Naive thymus-derived CD4-positive, alpha-beta T cell (primary cell): ENCODE measurements at regions of chr17 and their contacts with region 1.

Region 1: GRCh38 chr17:39621523-39622379 is 5.0 kb upstream of the PPP1R1B start:
- DNase-seq: peak; percentile 74 to 95 (median 86)
- ATAC-seq: peak; percentile 94
- H3K4me3 ChIP-seq: peak overlapping the region; percentile 41
- H3K4me3 Mint-ChIP-seq: peak overlapping the region in 8 of 10 donors; percentile 34 to 82 (median 58)
- H3K27ac ChIP-seq: no peak overlapping the region
- H3K27ac Mint-ChIP-seq: peak overlapping the region in 4 of 9 donors; percentile 10 to 74 (median 66)
- H3K4me1 ChIP-seq: peaks cover 12 to 26% of the 10 kb centered on the region in 2 donors
- H3K4me1 Mint-ChIP-seq: peaks cover 15 to 38% (median 24%) of the 10 kb centered on the region in 7 donors
- H3K27me3 ChIP-seq: peaks cover 3 to 7% of the 10 kb centered on the region in 2 donors
- H3K27me3 Mint-ChIP-seq: peaks cover 5 to 69% (median 18%) of the 10 kb centered on the region in 5 donors

Region 2: GRCh38 chr17:39547713-39548478 is 73.9 kb before region 1 on chr17:
- CTCF ChIA-PET with region 1: interaction called, 53 read pairs
- POLR2A ChIA-PET with region 1: no interaction called
- intact Hi-C with region 1: loop called (anchors 1 kb)
- DNase-seq: peak; percentile 43 to 81 (median 68)
- ATAC-seq: peak; percentile 87
- H3K4me3 ChIP-seq: no peak overlapping the region
- H3K4me3 Mint-ChIP-seq: no peak overlapping the region
- H3K27ac ChIP-seq: no peak overlapping the region
- H3K27ac Mint-ChIP-seq: no peak overlapping the region
- H3K4me1 ChIP-seq: no peaks in the 10 kb centered on the region
- H3K4me1 Mint-ChIP-seq: peaks cover 0 to 2% (median 0%) of the 10 kb centered on the region in 7 donors
- H3K27me3 ChIP-seq: no peaks in the 10 kb centered on the region
- H3K27me3 Mint-ChIP-seq: no peaks in the 10 kb centered on the region

Region 3: DNA sequence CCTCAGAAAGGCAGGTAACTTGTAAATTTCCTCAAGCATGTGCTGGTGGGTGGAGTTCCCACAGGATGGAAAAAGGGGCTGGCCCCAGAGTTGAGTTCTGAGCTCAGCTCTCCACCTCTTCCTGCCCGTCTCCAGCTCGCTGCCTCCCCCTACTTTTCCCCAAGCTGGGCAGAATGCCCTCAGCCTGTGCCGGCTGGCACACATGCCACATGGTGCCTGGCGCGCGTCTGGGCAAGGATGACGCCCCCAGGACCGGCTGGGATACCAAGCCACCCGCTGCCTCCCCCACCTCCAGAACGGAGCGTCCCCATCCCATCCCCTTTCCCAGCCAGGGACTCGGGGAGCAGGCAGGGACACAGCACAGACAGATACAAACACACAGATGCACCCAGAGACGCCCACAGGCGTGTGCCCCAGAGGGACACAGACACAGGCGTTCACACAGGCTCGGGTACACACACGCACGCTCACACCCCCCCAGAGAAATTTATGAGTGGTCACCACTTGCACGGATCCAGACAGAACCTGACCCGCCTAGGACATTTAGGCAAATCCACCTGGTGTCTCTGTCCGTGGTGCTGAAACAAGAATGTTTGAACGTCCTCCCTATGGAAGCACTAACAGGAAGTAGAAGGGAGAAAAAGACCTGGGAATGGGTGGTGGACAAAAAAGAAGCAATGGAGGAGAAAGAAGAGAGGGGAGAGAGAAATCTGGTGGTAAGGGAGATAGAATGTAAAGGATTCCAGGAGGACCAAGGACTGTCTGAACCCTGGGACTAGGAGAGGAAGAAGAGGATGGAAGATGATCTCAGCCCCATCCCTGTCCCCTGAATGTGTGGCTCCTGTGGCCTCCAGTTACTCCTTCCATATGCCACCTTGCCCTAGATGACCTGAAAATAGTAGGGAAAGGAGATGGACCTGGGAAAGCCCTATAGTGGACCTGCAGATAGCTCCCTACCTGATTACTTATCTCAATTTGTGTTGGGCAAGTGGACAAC is 29.5 kb before region 1 on chr17:
- CTCF ChIA-PET with region 1: no interaction called
- POLR2A ChIA-PET with region 1: no interaction called
- intact Hi-C with region 1: no loop called
- DNase-seq: peak in 1 of 9 donors; percentile 34
- ATAC-seq: no peak
- H3K4me3 ChIP-seq: no peak overlapping the region
- H3K4me3 Mint-ChIP-seq: no peak overlapping the region
- H3K27ac ChIP-seq: no peak overlapping the region
- H3K27ac Mint-ChIP-seq: no peak overlapping the region
- H3K4me1 ChIP-seq: no peaks in the 10 kb centered on the region
- H3K4me1 Mint-ChIP-seq: peaks cover 0 to 12% (median 8%) of the 10 kb centered on the region in 7 donors
- H3K27me3 ChIP-seq: peaks cover 0 to 7% of the 10 kb centered on the region in 2 donors
- H3K27me3 Mint-ChIP-seq: peaks cover 49 to 80% (median 67%) of the 10 kb centered on the region in 5 donors

Region 4: DNA sequence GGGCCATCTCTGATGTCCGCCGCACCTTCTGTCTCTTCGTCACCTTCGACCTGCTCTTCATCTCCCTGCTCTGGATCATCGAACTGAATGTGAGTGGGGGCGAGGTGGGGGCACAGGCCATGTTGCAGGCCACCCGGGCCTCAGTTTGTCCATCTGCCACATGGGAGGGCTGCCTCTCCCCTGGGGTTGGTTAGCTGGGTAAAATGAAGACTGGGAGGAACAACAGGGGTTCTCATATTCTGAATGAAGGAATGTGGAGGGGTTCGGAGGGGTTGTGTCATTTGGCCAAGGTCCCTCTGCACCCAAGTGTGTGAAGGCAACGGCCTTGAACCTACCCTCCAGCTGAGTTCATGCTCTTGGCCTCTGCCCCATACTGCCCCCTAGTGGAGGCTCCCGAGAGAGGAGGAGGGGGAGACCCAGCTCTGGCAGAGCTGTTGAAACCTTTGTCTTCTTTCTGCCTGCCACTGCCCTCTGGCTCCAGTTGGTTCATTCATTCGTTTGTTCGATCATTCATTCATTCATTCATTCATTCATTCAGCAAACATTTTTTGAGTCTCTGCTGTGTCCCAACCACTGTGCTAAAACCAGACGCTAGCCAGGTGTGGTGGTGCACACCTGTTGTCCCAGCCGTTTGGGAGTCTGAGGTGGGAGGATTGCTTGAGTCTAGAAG is 32.0 kb after region 1 on chr17:
- CTCF ChIA-PET with region 1: interaction called, 25 read pairs
- POLR2A ChIA-PET with region 1: no interaction called
- intact Hi-C with region 1: loop called (anchors 1 to 2 kb)
- DNase-seq: peak; percentile 58 to 83 (median 71)
- ATAC-seq: peak; percentile 91
- H3K4me3 ChIP-seq: no peak overlapping the region
- H3K4me3 Mint-ChIP-seq: no peak overlapping the region
- H3K27ac ChIP-seq: peak overlapping the region; percentile 36
- H3K27ac Mint-ChIP-seq: peak overlapping the region in 5 of 9 donors; percentile 21 to 74 (median 51)
- H3K4me1 ChIP-seq: peaks cover 4 to 23% of the 10 kb centered on the region in 2 donors
- H3K4me1 Mint-ChIP-seq: peaks cover 24 to 74% (median 63%) of the 10 kb centered on the region in 7 donors
- H3K27me3 ChIP-seq: no peaks in the 10 kb centered on the region
- H3K27me3 Mint-ChIP-seq: no peaks in the 10 kb centered on the region

Region 5: DNA sequence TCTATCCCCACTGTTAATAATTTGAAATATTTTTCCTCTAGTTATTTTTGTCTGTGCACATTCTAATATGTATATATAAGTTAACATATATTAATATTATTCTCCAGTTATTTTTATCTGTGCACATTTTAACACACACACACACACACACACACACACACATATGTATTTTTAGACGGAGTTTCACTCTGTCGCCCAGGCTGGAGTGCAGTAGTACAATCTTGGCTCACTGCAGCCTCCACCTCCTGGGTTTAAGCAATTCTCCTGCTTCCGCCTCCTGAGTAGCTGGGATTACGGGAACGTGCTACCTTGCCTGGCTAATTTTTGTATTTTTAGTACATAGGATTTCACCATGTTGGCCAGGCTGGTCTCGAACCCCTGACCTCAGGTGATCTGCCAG is 95.9 kb after region 1 on chr17:
- CTCF ChIA-PET with region 1: interaction called, 3 read pairs
- POLR2A ChIA-PET with region 1: no interaction called
- intact Hi-C with region 1: loop called in 1 of 2 experiments (anchors 1 kb)
- DNase-seq: no peak
- ATAC-seq: no peak
- H3K4me3 ChIP-seq: no peak overlapping the region
- H3K4me3 Mint-ChIP-seq: no peak overlapping the region
- H3K27ac ChIP-seq: no peak overlapping the region
- H3K27ac Mint-ChIP-seq: no peak overlapping the region
- H3K4me1 ChIP-seq: no peaks in the 10 kb centered on the region
- H3K4me1 Mint-ChIP-seq: peaks cover 0 to 2% (median 0%) of the 10 kb centered on the region in 7 donors
- H3K27me3 ChIP-seq: no peaks in the 10 kb centered on the region
- H3K27me3 Mint-ChIP-seq: no peaks in the 10 kb centered on the region

Region 6: DNA sequence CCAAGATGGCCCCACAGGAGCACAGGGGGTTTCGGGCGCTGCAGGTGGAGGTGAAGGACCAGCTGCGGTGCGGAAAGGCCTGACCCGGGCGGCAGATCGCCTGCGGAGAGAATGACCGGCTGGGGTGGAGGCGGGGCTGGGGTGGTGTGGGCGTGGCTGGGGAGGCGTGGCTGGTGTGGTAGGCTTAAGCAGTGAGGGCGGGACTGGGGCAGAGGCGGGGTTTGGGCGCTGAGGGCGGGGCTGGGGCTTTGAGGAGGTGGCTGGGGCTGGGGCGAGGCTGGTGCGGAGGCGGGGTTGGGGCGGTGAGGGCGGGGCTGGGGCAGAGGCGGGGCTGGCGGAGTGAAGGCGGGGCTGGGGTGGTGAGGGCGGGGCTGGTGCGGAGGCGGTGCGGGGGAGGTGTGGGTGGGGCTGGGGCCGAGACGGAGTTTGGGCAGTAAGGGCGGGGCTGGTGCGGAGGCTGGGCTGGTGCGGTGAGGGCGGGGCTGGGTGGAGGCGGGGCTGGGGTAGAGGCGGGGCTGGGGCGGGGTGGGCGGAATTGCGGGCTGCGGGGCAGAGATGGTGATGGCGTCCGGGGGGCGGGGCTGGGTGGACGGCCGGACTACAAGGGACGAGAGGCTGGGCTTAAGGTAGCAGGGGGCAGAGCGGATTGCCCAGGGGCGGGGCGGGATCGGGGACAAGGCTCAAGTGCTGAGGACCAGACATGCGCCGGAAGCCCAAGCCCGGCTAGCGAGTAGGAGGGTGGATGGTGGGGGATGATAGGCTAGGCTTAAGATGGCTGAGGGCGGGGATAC is 331.1 kb after region 1 on chr17:
- CTCF ChIA-PET with region 1: no interaction called
- POLR2A ChIA-PET with region 1: no interaction called
- intact Hi-C with region 1: loop called in 1 of 2 experiments (anchors 2 kb)
- DNase-seq: peak; percentile 81 to 98 (median 90)
- ATAC-seq: peak; percentile 94
- H3K4me3 ChIP-seq: peak overlapping the region; percentile 71
- H3K4me3 Mint-ChIP-seq: peak overlapping the region; percentile 68 to 93 (median 82)
- H3K27ac ChIP-seq: peak overlapping the region; percentile 74
- H3K27ac Mint-ChIP-seq: peak overlapping the region; percentile 28 to 87 (median 72)
- H3K4me1 ChIP-seq: peaks cover 5 to 18% of the 10 kb centered on the region in 2 donors
- H3K4me1 Mint-ChIP-seq: peaks cover 1 to 43% (median 27%) of the 10 kb centered on the region in 7 donors
- H3K27me3 ChIP-seq: no peaks in the 10 kb centered on the region
- H3K27me3 Mint-ChIP-seq: peaks cover 0 to 7% (median 0%) of the 10 kb centered on the region in 5 donors

Region 7: GRCh38 chr17:39980351-39981206 is 358.8 kb after region 1 on chr17 and contains the start of gene PSMD3:
- CTCF ChIA-PET with region 1: no interaction called
- POLR2A ChIA-PET with region 1: no interaction called
- intact Hi-C with region 1: loop called (anchors 1 kb)
- DNase-seq: peak; percentile 86 to 99 (median 98)
- ATAC-seq: peak; percentile 97
- H3K4me3 ChIP-seq: peak within 1 kb of the TSS; percentile 63
- H3K4me3 Mint-ChIP-seq: peak within 1 kb of the TSS; percentile 89 to 97 (median 94)
- H3K27ac ChIP-seq: peak within 1 kb of the TSS; percentile 91
- H3K27ac Mint-ChIP-seq: peak within 1 kb of the TSS; percentile 89 to 96 (median 93)
- H3K4me1 ChIP-seq: peaks cover 17 to 23% of the 10 kb centered on the region in 2 donors
- H3K4me1 Mint-ChIP-seq: peaks cover 24 to 50% (median 46%) of the 10 kb centered on the region in 7 donors
- H3K27me3 ChIP-seq: no peaks in the 10 kb centered on the region
- H3K27me3 Mint-ChIP-seq: peaks cover 0 to 13% (median 0%) of the 10 kb centered on the region in 5 donors
- total RNA-seq, gene PSMD3: 55.7 to 111 (median 68.9) TPM